Caco-2 (cell line): ENCODE measurements at regions of chr14 and their contacts with region 1.

Region 1: DNA sequence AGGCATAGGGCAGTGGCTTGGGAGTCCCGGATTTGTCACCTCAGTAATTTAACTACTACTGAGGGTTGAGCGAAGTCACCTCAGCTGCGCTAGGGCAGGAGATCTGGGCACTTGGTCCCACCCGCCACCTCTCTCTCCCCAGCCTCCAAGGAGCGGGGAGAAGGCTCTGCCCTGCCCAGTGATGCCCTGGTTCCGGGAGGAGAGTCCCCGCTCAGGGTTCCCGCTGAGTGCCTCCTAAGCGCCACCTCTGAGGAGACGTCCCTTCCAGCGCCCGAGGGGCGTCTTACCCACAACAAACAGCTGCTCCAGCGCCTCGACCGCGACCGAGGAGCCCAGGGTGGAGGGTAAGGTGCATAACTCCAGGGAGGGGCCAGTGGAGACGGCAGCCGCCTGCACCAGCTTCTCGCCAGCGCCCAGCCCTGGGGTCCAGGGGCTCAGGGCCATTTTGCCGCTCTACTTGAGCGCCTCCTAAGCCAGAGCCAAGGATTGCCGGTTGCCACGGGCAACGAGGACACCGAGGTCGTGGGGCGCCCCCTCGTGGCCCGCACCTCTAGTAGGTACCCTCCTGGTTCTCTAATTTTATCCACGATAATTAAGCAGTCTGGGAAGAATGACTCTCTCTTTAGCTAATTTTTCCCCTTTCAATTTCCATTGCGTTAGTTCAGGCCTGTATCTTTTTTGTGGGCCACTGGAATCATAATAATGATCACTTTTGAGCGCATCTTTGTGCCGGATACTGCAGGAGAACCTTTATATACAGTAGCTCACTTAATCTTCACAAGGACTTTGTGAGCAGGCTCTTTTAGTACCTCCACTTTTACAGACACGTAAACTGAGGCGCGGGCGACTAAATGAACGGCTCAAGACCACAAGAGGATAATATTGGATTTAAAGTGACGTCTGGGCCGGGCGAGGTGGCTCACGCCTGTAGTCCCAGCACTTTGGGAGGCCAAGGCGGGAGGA is at the start of gene CCDC175:
- DNase-seq: peak; percentile 81 to 84
- H3K4me3 ChIP-seq: peak within 1 kb of the TSS; percentile 39
- H3K4me3 Mint-ChIP-seq: peak within 1 kb of the TSS; percentile 69
- H3K27ac Mint-ChIP-seq: no peak within 1 kb of the TSS
- H3K4me1 ChIP-seq: no peaks in the 10 kb centered on the region
- H3K4me1 Mint-ChIP-seq: no peaks in the 10 kb centered on the region
- H3K27me3 ChIP-seq: no peaks in the 10 kb centered on the region
- H3K27me3 Mint-ChIP-seq: no peaks in the 10 kb centered on the region
- CTCF ChIP-seq: peak; percentile 77 to 81
- total RNA-seq, gene CCDC175: not detected in 2 replicates

Region 2: GRCh38 chr14:59483900-59484638 is 92.5 kb before region 1 on chr14 and contains the starts of genes JKAMP and L3HYPDH:
- CTCF ChIA-PET with region 1: interaction called, 13 read pairs
- POLR2A ChIA-PET with region 1: interaction called, 3 read pairs
- intact Hi-C with region 1: no loop called
- DNase-seq: peak; percentile 97 to 98
- H3K4me3 ChIP-seq: peak within 1 kb of the TSS; percentile 90
- H3K4me3 Mint-ChIP-seq: peak within 1 kb of the TSS; percentile 92
- H3K27ac Mint-ChIP-seq: peak within 1 kb of the TSS; percentile 92
- H3K4me1 ChIP-seq: peaks cover 12% of the 10 kb centered on the region; the same call in 1 of the 2 replicates
- H3K4me1 Mint-ChIP-seq: no peaks in the 10 kb centered on the region
- H3K27me3 ChIP-seq: no peaks in the 10 kb centered on the region
- H3K27me3 Mint-ChIP-seq: no peaks in the 10 kb centered on the region
- CTCF ChIP-seq: peak; percentile 54 to 60
- total RNA-seq, gene JKAMP: 24.7 and 31.0 TPM in 2 replicates
- total RNA-seq, gene L3HYPDH: 15.3 and 15.7 TPM in 2 replicates

Region 3: DNA sequence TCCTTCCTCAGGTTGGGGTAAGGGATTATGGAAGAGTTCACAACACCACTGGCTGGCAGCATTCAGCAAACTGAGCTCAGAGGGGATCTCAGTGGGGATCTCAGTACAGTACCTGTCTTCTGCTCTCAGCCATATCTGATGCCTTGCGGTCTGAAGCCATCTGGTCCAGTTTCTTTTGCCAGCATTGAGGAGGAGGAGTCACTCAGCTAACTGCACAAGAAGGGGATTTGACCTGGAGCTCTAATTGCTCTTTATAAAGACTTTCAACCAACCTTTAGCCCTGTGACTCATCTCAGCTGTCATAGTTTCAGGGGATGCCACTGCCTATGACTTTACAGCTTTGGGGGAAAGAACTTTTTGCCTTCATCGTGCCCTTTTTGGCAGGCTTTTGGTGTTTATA is 47.4 kb before region 1 on chr14:
- CTCF ChIA-PET with region 1: no interaction called
- POLR2A ChIA-PET with region 1: no interaction called
- intact Hi-C with region 1: no loop called
- DNase-seq: no peak
- H3K4me3 ChIP-seq: no peak overlapping the region
- H3K4me3 Mint-ChIP-seq: no peak overlapping the region
- H3K27ac Mint-ChIP-seq: no peak overlapping the region
- H3K4me1 ChIP-seq: no peaks in the 10 kb centered on the region
- H3K4me1 Mint-ChIP-seq: no peaks in the 10 kb centered on the region
- H3K27me3 ChIP-seq: no peaks in the 10 kb centered on the region
- H3K27me3 Mint-ChIP-seq: no peaks in the 10 kb centered on the region
- CTCF ChIP-seq: no peak

Region 4: GRCh38 chr14:59547310-59547709 is 29.3 kb before region 1 on chr14:
- CTCF ChIA-PET with region 1: no interaction called
- POLR2A ChIA-PET with region 1: no interaction called
- intact Hi-C with region 1: no loop called
- DNase-seq: no peak
- H3K4me3 ChIP-seq: no peak overlapping the region
- H3K4me3 Mint-ChIP-seq: no peak overlapping the region
- H3K27ac Mint-ChIP-seq: no peak overlapping the region
- H3K4me1 ChIP-seq: no peaks in the 10 kb centered on the region
- H3K4me1 Mint-ChIP-seq: no peaks in the 10 kb centered on the region
- H3K27me3 ChIP-seq: no peaks in the 10 kb centered on the region
- H3K27me3 Mint-ChIP-seq: peaks cover 3% of the 10 kb centered on the region
- CTCF ChIP-seq: no peak